Sciatic nerve (tissue), 2 donors: ENCODE measurements at regions of chr4 and their contacts with region 1.

Region 1: GRCh38 chr4:77001907-77002306 is 52.4 kb downstream of the SEPTIN11 start:
- DNase-seq: no peak
- ATAC-seq: no peak

Region 2: GRCh38 chr4:76969941-76970529 is 31.9 kb before region 1 on chr4:
- intact Hi-C with region 1: loop called (anchors 2 kb)
- DNase-seq: no peak
- ATAC-seq: no peak

Region 3: GRCh38 chr4:77023920-77024319 is 22.0 kb after region 1 on chr4:
- intact Hi-C with region 1: loop called (anchors 1 kb)
- DNase-seq: no peak
- ATAC-seq: no peak

Region 4: GRCh38 chr4:77510367-77510766 is 508.5 kb after region 1 on chr4:
- intact Hi-C with region 1: no loop called
- DNase-seq: no peak
- ATAC-seq: no peak